OCI-LY7 (cell line): ENCODE measurements at regions of chr2 and their contacts with region 1.

Region 1: GRCh38 chr2:169109502-169110409 is 40.4 kb downstream of the DHRS9 start:
- DNase-seq: peak; percentile 74
- H3K4me3 ChIP-seq: no peak overlapping the region
- H3K27ac ChIP-seq: no peak overlapping the region
- H3K4me1 ChIP-seq: peaks cover 20% of the 10 kb centered on the region
- CTCF ChIP-seq: peak; percentile 96

Region 2: GRCh38 chr2:168961450-168962229 is 148.1 kb before region 1 on chr2:
- CTCF ChIA-PET with region 1: no interaction called
- POLR2A ChIA-PET with region 1: interaction called, 3 read pairs
- intact Hi-C with region 1: loop called (anchors 1 kb)
- DNase-seq: peak; percentile 68
- H3K4me3 ChIP-seq: no peak overlapping the region
- H3K27ac ChIP-seq: no peak overlapping the region
- H3K4me1 ChIP-seq: no peaks in the 10 kb centered on the region
- CTCF ChIP-seq: peak; percentile 91

Region 3: GRCh38 chr2:169131587-169132512 is 22.1 kb after region 1 on chr2:
- CTCF ChIA-PET with region 1: no interaction called
- POLR2A ChIA-PET with region 1: no interaction called
- intact Hi-C with region 1: loop called (anchors 1 kb)
- DNase-seq: peak; percentile 50
- H3K4me3 ChIP-seq: no peak overlapping the region
- H3K27ac ChIP-seq: no peak overlapping the region
- H3K4me1 ChIP-seq: no peaks in the 10 kb centered on the region
- CTCF ChIP-seq: peak; percentile 88

Region 4: DNA sequence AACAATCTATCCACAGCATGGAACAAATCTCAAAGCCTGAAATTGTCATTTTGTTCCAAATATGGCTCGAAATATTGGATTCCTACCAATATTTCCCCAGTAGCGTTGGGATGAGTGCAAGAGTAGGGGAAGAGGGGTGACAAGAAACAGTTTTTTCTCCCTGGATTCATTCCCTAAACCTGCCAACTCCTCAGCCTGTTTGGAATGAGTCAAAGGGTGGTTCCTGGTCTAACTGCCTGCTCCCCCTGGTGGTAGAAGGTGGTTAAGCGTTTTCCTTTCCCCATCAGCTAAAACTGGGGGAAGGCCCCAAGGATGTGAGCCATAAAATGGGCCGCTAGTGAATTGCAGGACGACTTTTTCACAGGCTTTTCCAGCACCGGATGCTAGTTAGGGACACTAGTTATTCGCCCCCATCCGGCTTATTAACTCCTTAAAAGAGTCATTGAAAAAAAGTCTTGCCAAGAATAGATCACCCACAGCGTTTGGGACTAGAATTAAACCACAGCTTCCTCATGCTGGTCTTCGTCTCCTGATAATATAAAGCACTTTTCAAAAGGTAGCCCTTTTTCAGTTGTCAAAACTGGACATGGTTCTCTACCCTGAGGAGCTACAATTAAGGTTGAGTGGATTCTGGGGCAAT is 32.1 kb after region 1 on chr2:
- CTCF ChIA-PET with region 1: interaction called, 6 read pairs
- POLR2A ChIA-PET with region 1: interaction called, 6 read pairs
- intact Hi-C with region 1: loop called (anchors 2 kb)
- DNase-seq: peak; percentile 51
- H3K4me3 ChIP-seq: no peak overlapping the region
- H3K27ac ChIP-seq: no peak overlapping the region
- H3K4me1 ChIP-seq: peaks cover 13% of the 10 kb centered on the region
- CTCF ChIP-seq: peak; percentile 89

Region 5: GRCh38 chr2:169221745-169222369 is 112.1 kb after region 1 on chr2:
- CTCF ChIA-PET with region 1: interaction called, 10 read pairs
- POLR2A ChIA-PET with region 1: interaction called, 4 read pairs
- intact Hi-C with region 1: loop called (anchors 1 kb)
- DNase-seq: no peak
- H3K4me3 ChIP-seq: no peak overlapping the region
- H3K27ac ChIP-seq: no peak overlapping the region
- H3K4me1 ChIP-seq: no peaks in the 10 kb centered on the region
- CTCF ChIP-seq: peak; percentile 72

Region 6: GRCh38 chr2:169275696-169276444 is 166.1 kb after region 1 on chr2:
- CTCF ChIA-PET with region 1: no interaction called
- POLR2A ChIA-PET with region 1: no interaction called
- intact Hi-C with region 1: loop called (anchors 2 kb)
- DNase-seq: no peak
- H3K4me3 ChIP-seq: no peak overlapping the region
- H3K27ac ChIP-seq: no peak overlapping the region
- H3K4me1 ChIP-seq: no peaks in the 10 kb centered on the region
- CTCF ChIP-seq: peak; percentile 40

Region 7: DNA sequence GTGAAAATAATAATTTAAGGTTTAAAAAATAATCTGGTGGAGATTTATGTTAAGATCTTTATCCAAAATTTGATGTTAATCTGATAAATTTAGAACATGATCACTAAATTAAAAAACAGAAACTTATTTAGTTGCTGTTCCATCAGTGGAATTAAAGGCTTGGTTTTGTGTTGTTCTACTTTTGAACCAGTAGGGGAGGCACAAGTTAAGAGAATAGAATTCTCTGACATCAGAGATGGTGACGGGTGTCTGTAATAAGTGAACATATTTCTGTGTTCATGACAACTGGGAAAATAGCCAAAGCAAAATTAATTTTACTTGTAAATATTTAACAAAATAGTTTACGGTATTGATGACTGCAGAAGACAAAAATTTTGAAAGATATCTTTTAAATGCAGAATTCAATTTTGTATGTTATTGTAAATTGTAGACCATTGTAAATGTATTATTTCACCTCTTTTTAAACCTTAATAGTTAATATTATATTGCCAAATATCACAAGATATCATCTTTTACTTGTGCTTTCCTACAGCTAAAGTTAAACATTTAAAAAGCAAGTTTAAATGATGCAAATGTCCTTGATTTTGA is 823.5 kb after region 1 on chr2:
- CTCF ChIA-PET with region 1: no interaction called
- POLR2A ChIA-PET with region 1: no interaction called
- intact Hi-C with region 1: loop called (anchors 1 kb)
- DNase-seq: peak; percentile 33
- H3K4me3 ChIP-seq: no peak overlapping the region
- H3K27ac ChIP-seq: no peak overlapping the region
- H3K4me1 ChIP-seq: no peaks in the 10 kb centered on the region
- CTCF ChIP-seq: peak; percentile 79